Activated B cell treated with CpG ODN at 0.5 μM for 24 hours (primary cell): ENCODE measurements at regions of chr12 and their contacts with region 1.

Region 1: DNA sequence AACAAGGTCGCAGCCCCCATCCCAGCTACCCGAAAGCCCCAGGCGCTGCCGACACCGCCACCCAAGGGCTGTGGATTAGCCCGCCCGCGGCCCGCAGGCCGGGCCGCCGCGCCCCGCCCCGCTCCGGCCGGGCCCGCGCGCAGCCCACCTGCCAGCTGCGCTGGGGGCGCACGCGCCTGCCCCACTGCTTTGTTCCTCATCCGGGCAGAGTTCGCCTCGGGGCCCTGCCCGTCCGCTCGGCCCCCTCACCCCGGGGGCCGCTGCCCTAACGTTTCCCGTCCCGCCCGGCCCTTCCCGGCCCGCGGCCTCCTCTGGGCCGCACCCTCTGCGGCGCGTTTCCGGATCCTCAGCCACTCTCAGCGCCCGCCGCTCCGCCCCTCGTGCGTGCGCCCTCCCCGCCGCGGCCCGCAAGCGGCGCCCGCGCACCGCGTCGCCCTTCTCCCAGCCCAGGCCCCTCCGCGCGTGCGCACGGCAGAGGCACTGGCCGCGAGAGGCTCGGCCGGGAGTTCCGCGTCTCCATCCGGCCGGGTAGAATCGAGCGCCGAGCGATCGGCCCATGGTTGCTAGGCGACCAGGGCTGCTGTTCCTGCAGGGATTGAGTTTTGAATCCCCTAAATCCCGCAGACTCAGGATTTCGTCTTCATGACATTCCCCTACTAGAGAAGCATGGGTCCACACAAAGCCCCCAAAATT is at the start of gene PRDM4:
- DNase-seq: peak; percentile 93
- ATAC-seq: peak; percentile 91
- H3K4me3 Mint-ChIP-seq: peak within 1 kb of the TSS; percentile 89
- H3K27ac Mint-ChIP-seq: peak within 1 kb of the TSS; percentile 86
- H3K4me1 Mint-ChIP-seq: peaks cover 33% of the 10 kb centered on the region
- H3K27me3 Mint-ChIP-seq: no peaks in the 10 kb centered on the region
- CTCF ChIP-seq: no peak
- total RNA-seq, gene PRDM4: 37.8 and 45.2 TPM in 2 replicates

Region 2: GRCh38 chr12:106357549-106358395 is 1403.2 kb before region 1 on chr12 and contains the start of gene POLR3B:
- CTCF ChIA-PET with region 1: no interaction called
- POLR2A ChIA-PET with region 1: no interaction called
- intact Hi-C with region 1: loop called (anchors 5 kb)
- DNase-seq: peak; percentile 96
- ATAC-seq: peak; percentile 92
- H3K4me3 Mint-ChIP-seq: peak within 1 kb of the TSS; percentile 95
- H3K27ac Mint-ChIP-seq: peak within 1 kb of the TSS; percentile 92
- H3K4me1 Mint-ChIP-seq: peaks cover 16% of the 10 kb centered on the region
- H3K27me3 Mint-ChIP-seq: no peaks in the 10 kb centered on the region
- CTCF ChIP-seq: peak; percentile 49
- total RNA-seq, gene POLR3B: 7.3 and 8.0 TPM in 2 replicates

Region 3: GRCh38 chr12:107736914-107737313 is 24.0 kb before region 1 on chr12:
- CTCF ChIA-PET with region 1: interaction called, 3 read pairs
- POLR2A ChIA-PET with region 1: interaction called, 4 read pairs
- intact Hi-C with region 1: loop called (anchors 1 kb)
- DNase-seq: peak; percentile 53
- ATAC-seq: peak; percentile 99
- H3K4me3 Mint-ChIP-seq: peak overlapping the region; percentile 53
- H3K27ac Mint-ChIP-seq: peak overlapping the region; percentile 93
- H3K4me1 Mint-ChIP-seq: peaks cover 72% of the 10 kb centered on the region
- H3K27me3 Mint-ChIP-seq: no peaks in the 10 kb centered on the region
- CTCF ChIP-seq: no peak

Region 4: DNA sequence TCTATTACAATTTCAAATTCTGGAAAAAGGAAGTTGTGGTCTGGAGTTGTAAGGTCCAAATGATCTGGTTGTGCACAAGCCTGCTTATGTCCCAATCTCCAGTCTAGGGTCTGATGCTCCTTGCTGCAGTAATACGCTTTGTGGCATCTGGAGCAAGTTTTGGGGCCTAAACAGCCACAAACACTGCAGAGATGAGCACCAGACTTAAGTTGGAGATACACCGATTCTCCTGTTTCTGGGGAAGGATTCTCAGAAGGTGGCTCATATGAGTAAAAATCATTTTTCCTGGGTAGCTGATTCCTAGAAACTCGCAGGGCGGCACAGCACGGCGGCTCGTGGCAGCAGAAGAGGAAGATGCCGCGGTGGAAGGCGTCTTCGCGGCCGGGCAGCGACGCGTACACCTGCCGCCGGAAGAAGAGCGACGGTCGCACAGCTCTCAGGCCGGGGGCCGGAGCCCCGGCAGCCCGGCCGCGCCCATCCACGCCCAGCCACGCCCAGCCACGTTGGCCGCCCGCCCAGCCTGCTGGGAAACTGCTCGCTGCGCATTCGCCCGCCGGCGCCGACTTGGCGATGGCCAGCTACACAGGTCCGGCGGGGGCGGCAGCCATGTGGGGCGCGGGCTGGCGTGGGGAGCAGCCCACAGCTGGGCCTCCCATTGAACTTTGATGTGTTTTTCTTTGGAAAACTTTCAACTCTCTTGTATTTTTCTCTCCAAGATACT is 142.5 kb after region 1 on chr12:
- CTCF ChIA-PET with region 1: no interaction called
- POLR2A ChIA-PET with region 1: no interaction called
- intact Hi-C with region 1: loop called (anchors 1 kb)
- DNase-seq: peak; percentile 64
- ATAC-seq: peak; percentile 99
- H3K4me3 Mint-ChIP-seq: peak overlapping the region; percentile 81
- H3K27ac Mint-ChIP-seq: peak overlapping the region; percentile 66
- H3K4me1 Mint-ChIP-seq: peaks cover 12% of the 10 kb centered on the region
- H3K27me3 Mint-ChIP-seq: peaks cover 27% of the 10 kb centered on the region
- CTCF ChIP-seq: no peak

Region 5: DNA sequence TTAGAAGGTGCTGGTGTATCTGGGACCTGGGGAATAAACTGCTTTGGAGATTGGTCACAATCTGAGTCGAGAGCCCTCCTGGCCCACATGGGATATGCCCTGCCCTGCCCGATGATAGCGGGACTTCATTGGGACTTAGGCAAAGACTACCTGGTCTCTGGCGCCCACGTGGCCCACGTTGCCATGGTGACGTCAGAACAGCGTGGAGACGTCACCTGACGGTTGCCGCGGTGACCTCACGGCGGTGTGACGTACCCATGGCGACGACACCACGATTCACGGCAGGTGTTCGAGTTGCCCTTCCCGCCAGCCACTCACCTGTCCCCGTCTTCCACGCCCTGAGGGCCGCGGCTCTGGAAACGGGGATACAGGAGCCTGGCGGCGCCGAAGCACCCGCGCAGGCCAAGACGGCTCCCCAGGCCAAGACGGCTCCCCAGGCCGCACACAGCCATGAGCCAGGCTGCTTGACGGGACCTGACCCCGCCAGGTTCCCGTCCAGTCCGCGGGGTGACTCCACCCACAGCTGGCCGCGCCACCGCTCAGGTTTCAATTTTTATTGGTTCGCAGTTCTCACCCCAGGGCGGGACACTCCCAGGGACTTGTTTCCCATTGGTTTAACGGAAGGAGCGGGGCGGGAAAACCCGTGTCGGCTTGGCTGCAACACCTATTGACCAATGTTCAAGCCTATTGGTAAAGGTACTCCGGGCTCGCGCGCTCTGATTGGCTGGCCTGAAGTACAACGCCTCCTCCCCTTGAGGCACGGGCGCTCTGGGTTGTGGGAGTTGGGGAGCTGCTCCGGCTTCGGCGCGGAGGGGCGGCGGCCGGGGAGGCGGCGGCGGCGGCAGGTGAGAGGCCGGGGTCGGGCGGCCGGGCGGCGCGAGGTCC is 1812.3 kb after region 1 on chr12 and contains the starts of genes MMAB and MVK:
- CTCF ChIA-PET with region 1: no interaction called
- POLR2A ChIA-PET with region 1: no interaction called
- intact Hi-C with region 1: loop called (anchors 5 kb)
- DNase-seq: peak; percentile 92
- ATAC-seq: peak; percentile 94
- H3K4me3 Mint-ChIP-seq: peak within 1 kb of the TSS; percentile 93
- H3K27ac Mint-ChIP-seq: peak within 1 kb of the TSS; percentile 90
- H3K4me1 Mint-ChIP-seq: peaks cover 25% of the 10 kb centered on the region
- H3K27me3 Mint-ChIP-seq: no peaks in the 10 kb centered on the region
- CTCF ChIP-seq: no peak
- total RNA-seq, gene MMAB: 62.8 and 63.3 TPM in 2 replicates
- total RNA-seq, gene MVK: 28.5 and 30.3 TPM in 2 replicates